H1 (cell line): ENCODE measurements at regions of chr1 and their contacts with region 1.

Region 1: GRCh38 chr1:149962123-149962548 is 25.5 kb upstream of the MTMR11 start:
- DNase-seq: no peak
- H3K4me3 ChIP-seq: no peak overlapping the region
- H3K27ac ChIP-seq: no peak overlapping the region
- H3K4me1 ChIP-seq: no peaks in the 10 kb centered on the region
- H3K27me3 ChIP-seq: no peaks in the 10 kb centered on the region
- CTCF ChIP-seq: peak in 2 of 3 experiments; percentile 59; a peak in 3 of 4 replicates
- EP300 ChIP-seq: no peak
- POLR2A ChIP-seq: no peak
- RAD21 ChIP-seq: peak; percentile 69 to 80

Region 2: DNA sequence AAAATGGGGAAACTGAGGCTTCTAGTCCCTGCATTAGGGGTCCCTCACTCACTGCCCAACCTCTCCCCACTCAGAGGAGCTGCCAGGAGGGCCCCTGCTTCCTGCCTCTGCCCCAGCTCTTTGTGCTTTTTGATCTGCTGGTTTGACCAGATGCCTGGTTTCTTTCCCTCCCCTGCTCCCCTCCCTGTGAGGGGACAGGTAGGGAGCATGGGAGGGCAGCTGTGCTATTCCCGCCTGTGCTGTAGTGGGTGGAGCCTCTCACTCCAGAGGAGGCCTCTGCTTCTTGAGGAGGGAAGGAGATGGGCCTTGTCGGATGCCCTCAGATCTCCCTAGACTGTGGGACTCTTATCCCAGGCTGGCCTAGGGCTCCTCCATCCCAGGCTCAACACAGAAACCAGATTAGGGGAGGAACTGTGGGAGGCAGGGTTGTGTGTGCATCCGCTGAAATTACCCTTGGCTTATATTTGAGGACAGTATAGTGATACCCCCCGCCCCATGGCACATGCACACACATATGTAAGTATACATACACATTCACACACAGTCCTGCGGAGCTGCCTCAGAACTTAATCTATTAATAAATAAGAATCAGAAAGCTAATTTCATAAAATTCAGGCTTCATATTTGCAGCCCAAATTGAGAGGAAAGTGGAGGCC is 58.2 kb before region 1 on chr1:
- CTCF ChIA-PET with region 1: no interaction called
- POLR2A ChIA-PET with region 1: no interaction called
- DNase-seq: no peak
- H3K4me3 ChIP-seq: no peak overlapping the region
- H3K27ac ChIP-seq: 0 out of 2 replicates have a peak overlapping the region, but pooled peaks have one; percentile 12
- H3K4me1 ChIP-seq: peaks cover 0 to 7% (median 4%) of the 10 kb centered on the region in 4 experiments; a peak in 5 of 7 replicates
- H3K27me3 ChIP-seq: no peaks in the 10 kb centered on the region
- CTCF ChIP-seq: no peak
- EP300 ChIP-seq: no peak
- POLR2A ChIP-seq: 0 out of 3 replicates have a peak, but pooled peaks of 1 of the 2 experiments have one; percentile 22
- RAD21 ChIP-seq: no peak

Region 3: GRCh38 chr1:149986486-149987294 is 24.6 kb after region 1 on chr1:
- CTCF ChIA-PET with region 1: interaction called, 16 read pairs
- POLR2A ChIA-PET with region 1: no interaction called
- DNase-seq: no peak
- H3K4me3 ChIP-seq: no peak overlapping the region
- H3K27ac ChIP-seq: no peak overlapping the region
- H3K4me1 ChIP-seq: no peaks in the 10 kb centered on the region
- H3K27me3 ChIP-seq: no peaks in the 10 kb centered on the region
- CTCF ChIP-seq: no peak
- EP300 ChIP-seq: no peak
- POLR2A ChIP-seq: no peak
- RAD21 ChIP-seq: no peak

Region 4: GRCh38 chr1:150141452-150141851 is 179.3 kb after region 1 on chr1:
- CTCF ChIA-PET with region 1: no interaction called
- POLR2A ChIA-PET with region 1: no interaction called
- DNase-seq: no peak
- H3K4me3 ChIP-seq: no peak overlapping the region
- H3K27ac ChIP-seq: no peak overlapping the region
- H3K4me1 ChIP-seq: no peaks in the 10 kb centered on the region
- H3K27me3 ChIP-seq: no peaks in the 10 kb centered on the region
- CTCF ChIP-seq: no peak
- EP300 ChIP-seq: no peak
- POLR2A ChIP-seq: no peak
- RAD21 ChIP-seq: no peak

Region 5: GRCh38 chr1:150168960-150169601 is 206.9 kb after region 1 on chr1:
- CTCF ChIA-PET with region 1: interaction called, 27 read pairs
- POLR2A ChIA-PET with region 1: no interaction called
- DNase-seq: peak in 1 of 2 experiments; percentile 86
- H3K4me3 ChIP-seq: no peak overlapping the region
- H3K27ac ChIP-seq: no peak overlapping the region
- H3K4me1 ChIP-seq: peaks cover 0 to 3% (median 2%) of the 10 kb centered on the region in 4 experiments; a peak in 4 of 7 replicates
- H3K27me3 ChIP-seq: no peaks in the 10 kb centered on the region
- CTCF ChIP-seq: peak; percentile 74 to 78 (median 78)
- EP300 ChIP-seq: no peak
- POLR2A ChIP-seq: no peak
- RAD21 ChIP-seq: peak; percentile 83 to 89

Region 6: GRCh38 chr1:150186789-150187559 is 224.8 kb after region 1 on chr1:
- CTCF ChIA-PET with region 1: interaction called, 12 read pairs
- POLR2A ChIA-PET with region 1: no interaction called
- DNase-seq: no peak
- H3K4me3 ChIP-seq: no peak overlapping the region
- H3K27ac ChIP-seq: no peak overlapping the region
- H3K4me1 ChIP-seq: peaks cover 0 to 3% (median 0%) of the 10 kb centered on the region in 4 experiments; a peak in 1 of 7 replicates
- H3K27me3 ChIP-seq: no peaks in the 10 kb centered on the region
- CTCF ChIP-seq: peak in 2 of 3 experiments; percentile 4 to 38; a peak in 2 of 4 replicates
- EP300 ChIP-seq: no peak
- POLR2A ChIP-seq: no peak
- RAD21 ChIP-seq: peak; percentile 75 to 79

Region 7: DNA sequence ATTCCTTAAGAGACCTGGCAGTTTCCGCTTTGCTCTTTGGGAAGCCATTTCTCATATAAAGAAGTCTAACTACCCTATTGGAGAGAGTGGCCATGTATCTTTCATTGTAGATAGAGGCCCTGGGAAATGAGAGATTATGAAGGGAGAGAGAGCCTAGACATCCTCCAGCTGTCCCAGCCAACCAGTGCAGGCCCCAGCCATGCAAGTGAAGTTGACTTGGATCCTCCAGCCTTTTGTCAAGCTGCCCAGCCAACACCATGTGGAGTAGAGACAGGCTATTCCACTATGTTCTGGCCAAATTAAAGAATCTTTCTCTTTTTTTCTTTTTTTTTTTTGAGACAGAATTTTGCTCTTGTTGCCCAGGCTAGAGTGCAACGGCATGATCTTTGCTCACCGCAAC is 280.9 kb after region 1 on chr1:
- CTCF ChIA-PET with region 1: no interaction called
- POLR2A ChIA-PET with region 1: no interaction called
- DNase-seq: no peak
- H3K4me3 ChIP-seq: no peak overlapping the region
- H3K27ac ChIP-seq: no peak overlapping the region
- H3K4me1 ChIP-seq: no peaks in the 10 kb centered on the region
- H3K27me3 ChIP-seq: no peaks in the 10 kb centered on the region
- CTCF ChIP-seq: no peak
- EP300 ChIP-seq: no peak
- POLR2A ChIP-seq: no peak
- RAD21 ChIP-seq: no peak